ENCODE measurements at regions of chr1 and their contacts with region 1.

Region 1: GRCh38 chr1:48109390-48110013 is 112.3 kb upstream of the TRABD2B start:
- DNase-seq: peak in 1 of 2 experiments; percentile 10
- H3K4me3 ChIP-seq: no peak overlapping the region
- H3K27ac ChIP-seq: no peak overlapping the region
- H3K4me1 ChIP-seq: no peaks in the 10 kb centered on the region
- H3K27me3 ChIP-seq: no peaks in the 10 kb centered on the region
- CTCF ChIP-seq: peak; percentile 73

Region 2: DNA sequence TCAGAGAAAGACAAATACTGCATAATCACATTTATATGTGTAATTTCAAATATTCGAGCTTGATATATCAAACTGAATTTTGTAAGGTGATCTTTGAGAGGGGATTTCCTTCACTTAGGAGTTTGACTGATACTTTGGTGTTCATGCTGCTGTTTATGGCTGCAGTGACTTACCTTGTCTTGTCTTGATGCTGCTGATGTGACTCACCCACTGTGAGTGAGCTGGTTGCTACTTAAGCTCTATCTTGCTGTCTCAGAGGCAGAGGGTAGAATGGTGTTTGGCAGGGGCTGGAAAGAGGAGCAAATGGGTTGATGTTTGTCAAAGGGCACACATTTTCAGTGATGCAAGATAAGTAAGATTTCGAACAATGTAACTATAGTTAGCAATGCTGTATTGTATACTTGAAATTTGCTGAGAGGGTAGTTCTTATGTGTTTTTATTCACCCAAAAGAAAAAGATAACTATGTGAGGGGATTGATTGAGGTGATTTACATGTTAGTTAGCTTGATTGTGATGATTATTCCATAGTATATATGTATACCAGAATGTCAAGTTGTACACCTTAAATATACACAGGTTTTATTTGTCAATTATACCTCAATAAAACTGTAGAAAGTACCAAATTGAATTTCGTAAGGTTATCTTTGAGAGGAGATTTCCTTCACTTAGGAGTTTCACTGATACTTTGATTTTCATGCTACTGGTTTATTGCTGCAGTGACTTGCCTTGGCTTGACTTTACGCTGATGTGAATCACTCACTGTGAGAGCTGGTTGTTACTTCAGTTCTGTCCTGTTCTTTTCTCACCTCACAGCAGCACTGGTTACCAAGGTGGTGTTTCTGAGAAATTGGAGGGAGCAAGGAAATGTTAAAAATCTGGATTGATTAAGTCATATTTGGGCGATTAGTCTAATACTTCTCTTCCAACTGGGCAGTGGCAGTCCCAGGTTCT is 18.5 kb after region 1 on chr1:
- CTCF ChIA-PET with region 1: no interaction called
- POLR2A ChIA-PET with region 1: no interaction called
- intact Hi-C with region 1: no loop called
- DNase-seq: no peak
- H3K4me3 ChIP-seq: no peak overlapping the region
- H3K27ac ChIP-seq: no peak overlapping the region
- H3K4me1 ChIP-seq: no peaks in the 10 kb centered on the region
- H3K27me3 ChIP-seq: no peaks in the 10 kb centered on the region
- CTCF ChIP-seq: no peak

Region 3: GRCh38 chr1:48498096-48498791 is 388.7 kb after region 1 on chr1:
- CTCF ChIA-PET with region 1: no interaction called
- POLR2A ChIA-PET with region 1: no interaction called
- intact Hi-C with region 1: loop called (anchors 1 kb)
- DNase-seq: peak in 1 of 2 experiments; percentile 51
- H3K4me3 ChIP-seq: no peak overlapping the region
- H3K27ac ChIP-seq: no peak overlapping the region
- H3K4me1 ChIP-seq: no peaks in the 10 kb centered on the region
- H3K27me3 ChIP-seq: 0 out of 2 replicates have a peak, but pooled peaks cover 10% of the 10 kb centered on the region
- CTCF ChIP-seq: peak; percentile 88